Activated T-helper 2 cell treated with anti-CD3 and anti-CD28 coated beads, Interferon-gamma antibody, Interleukin-2, Interleukin-4, amounts not matched to agents 10 μg/mL and 5 μg/mL and 100 μg/mL, durations not matched to agents 14 hours and 24 hours and 36 hours (primary cell): ENCODE measurements at regions of chr6 and their contacts with region 1.

Region 1: DNA sequence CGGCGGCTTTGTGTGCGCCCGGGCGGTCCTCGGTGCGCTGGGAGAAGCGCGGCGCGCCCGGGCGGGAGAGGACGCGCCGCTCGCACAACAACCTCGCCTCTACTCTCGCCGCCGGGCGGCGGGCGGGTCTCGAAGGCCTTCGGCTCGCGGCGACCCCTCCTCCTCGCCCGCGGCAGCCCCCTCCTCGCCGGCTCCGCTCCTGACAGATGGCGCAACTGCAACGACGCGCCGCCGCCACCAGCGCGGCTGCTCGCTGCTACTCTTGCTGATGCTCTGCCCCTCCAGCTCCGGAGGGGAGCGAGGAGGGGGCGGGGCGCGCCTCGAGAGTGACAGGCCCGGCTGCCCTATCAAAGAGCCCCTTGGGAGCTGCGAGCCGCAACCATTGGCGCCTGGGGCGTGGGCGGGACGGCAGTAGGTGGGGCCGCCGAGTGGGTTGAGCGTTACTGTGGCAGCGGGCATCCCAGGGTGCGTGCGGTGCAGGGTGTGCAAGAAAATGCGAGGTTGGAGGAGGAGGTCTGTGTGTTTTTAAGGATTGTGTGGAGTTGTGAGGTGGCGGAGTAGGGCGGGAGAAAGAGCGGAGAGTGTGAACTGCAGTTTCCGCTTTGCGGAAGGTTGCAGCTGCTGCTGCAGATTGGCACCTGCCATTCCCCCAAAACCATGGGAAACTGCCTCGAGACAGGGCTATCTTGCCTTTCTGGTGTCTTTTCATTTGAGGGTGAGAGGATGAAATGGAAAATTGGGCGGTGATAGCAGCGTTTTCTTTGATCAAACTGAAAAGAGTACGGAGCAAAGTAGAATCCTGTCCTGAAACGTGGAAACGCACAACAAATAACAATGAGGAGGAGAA is at the start of gene FYN:
- DNase-seq: peak; percentile 98
- H3K4me3 Mint-ChIP-seq: peak within 1 kb of the TSS; percentile 97
- H3K27ac Mint-ChIP-seq: peak within 1 kb of the TSS; percentile 94
- H3K4me1 Mint-ChIP-seq: peaks cover 40% of the 10 kb centered on the region
- H3K27me3 Mint-ChIP-seq: peaks cover 2% of the 10 kb centered on the region
- total RNA-seq, gene FYN: 359 TPM in 2 replicates

Region 2: DNA sequence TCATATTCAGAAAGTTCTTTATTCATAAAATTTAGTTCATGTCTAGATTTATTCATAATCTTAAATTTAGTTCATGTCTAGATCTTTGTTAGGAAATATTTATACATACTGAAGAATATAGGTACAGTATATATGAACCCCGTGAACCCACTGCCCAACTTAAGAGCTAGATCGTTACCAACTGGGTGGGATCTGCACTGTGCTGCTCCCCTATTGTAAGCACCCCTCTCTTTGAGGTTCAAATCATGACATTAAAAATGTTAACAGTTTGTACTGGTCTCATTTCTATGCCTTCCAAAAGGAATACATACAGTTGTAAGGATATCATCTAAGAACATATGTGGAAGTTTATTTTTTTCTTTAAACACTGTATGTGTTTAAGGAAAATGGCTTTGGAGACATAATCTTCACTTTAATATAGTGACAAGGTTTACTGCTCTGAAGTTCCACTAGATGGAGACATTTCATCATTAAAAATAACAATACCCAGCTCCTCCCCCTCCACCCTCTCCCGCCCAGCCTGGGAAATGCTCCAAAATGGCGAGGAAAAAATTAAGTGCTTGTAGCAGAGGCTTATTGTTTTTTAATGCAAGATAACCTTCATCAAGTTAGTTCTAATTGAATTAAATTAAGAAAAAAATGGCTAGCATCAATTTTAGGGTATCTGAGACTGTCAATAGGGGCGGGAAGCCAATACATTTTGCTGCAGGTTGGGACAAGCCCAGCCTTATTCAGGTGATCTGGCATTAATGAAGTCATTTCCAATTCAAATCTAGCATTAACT is 163.6 kb before region 1 on chr6:
- intact Hi-C with region 1: loop called (anchors 1 kb)
- DNase-seq: peak; percentile 43
- H3K4me3 Mint-ChIP-seq: no peak overlapping the region
- H3K27ac Mint-ChIP-seq: peak overlapping the region; percentile 49
- H3K4me1 Mint-ChIP-seq: peaks cover 44% of the 10 kb centered on the region
- H3K27me3 Mint-ChIP-seq: no peaks in the 10 kb centered on the region

Region 3: GRCh38 chr6:111823831-111824607 is 49.4 kb before region 1 on chr6:
- intact Hi-C with region 1: loop called (anchors 1 kb)
- DNase-seq: no peak
- H3K4me3 Mint-ChIP-seq: peak overlapping the region; percentile 66
- H3K27ac Mint-ChIP-seq: peak overlapping the region; percentile 89
- H3K4me1 Mint-ChIP-seq: peaks cover 68% of the 10 kb centered on the region
- H3K27me3 Mint-ChIP-seq: no peaks in the 10 kb centered on the region

Region 4: DNA sequence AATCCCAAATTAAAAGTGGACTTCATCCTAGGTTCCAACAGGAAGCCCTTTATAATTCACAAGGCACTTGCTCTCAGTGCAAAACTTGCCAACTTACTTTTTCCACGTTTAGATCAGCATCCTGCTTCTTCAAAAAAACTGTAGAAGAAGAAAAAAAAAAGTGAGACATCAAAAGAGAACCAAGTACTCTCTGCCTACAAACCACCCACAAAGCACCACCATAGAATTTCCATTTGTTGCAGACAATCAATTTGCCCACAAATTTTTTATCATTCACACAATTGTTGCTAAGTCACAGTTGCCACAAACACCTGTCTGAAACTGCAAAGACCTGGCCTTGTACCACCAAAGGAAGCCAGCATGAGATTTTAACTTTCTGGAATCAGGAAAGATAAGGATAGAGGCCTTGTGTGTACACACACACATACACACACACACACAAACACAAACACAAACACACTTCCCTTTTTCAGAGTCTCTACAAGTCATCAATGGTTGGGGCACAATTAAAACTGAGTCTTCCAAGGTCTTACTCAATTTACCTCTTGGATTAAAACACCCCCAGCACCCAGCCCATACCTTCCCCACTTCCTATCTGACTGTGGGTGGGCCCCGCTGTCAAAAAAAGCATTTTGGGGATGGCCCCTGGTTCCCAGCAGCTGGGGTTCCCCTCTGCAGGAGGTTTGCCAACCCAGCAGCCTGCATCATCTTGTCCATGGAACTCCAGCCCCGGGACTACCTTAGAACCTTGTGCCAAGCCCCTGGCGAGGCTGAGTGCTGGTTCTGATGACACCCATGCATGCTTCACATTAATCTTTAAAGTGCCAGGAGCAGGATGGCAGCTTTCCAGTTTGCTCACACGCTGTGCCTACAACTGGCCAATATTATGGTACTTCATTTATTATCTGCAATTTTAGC is 26.6 kb before region 1 on chr6:
- intact Hi-C with region 1: loop called (anchors 1 kb)
- DNase-seq: no peak
- H3K4me3 Mint-ChIP-seq: peak overlapping the region; percentile 53
- H3K27ac Mint-ChIP-seq: peak overlapping the region; percentile 92
- H3K4me1 Mint-ChIP-seq: peaks cover 71% of the 10 kb centered on the region
- H3K27me3 Mint-ChIP-seq: no peaks in the 10 kb centered on the region

Region 5: DNA sequence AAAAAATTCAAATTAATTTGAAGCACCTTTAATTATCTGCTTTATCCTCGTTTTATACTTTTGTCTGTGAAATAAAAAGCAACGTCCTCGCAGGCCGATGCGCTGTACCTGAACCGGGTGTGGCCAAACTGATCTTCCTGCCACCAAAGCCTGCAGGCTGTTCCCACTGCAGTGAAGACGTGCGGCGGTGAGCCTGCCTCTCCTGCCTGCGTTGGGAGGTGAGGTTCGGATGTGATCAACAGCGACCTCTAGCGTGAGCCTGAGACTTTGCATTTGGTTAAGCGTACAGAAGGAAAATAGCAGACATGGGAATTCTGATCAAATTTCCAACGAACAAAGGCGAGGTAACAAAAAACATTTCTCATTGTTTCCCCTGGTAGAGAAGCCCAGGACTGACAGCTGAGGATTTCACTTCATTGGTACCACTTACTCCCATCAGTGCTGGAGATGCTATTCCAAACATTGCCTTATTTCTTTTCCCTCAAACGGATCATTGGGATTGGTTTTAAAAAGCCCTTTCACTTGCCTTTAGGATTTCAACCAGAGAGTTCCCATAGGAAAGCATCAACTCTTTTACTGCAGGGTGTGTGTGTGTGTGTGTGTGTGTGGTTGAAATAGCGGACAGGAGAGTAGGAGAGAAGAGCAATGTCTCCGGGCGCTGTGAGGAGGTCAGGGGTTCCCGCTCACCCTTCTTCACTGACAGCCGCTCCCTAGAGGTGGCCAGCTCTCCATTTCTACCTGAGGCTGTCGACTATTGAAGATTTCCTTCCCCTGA is 123.9 kb after region 1 on chr6:
- intact Hi-C with region 1: loop called (anchors 1 kb)
- DNase-seq: peak; percentile 69
- H3K4me3 Mint-ChIP-seq: no peak overlapping the region
- H3K27ac Mint-ChIP-seq: no peak overlapping the region
- H3K4me1 Mint-ChIP-seq: peaks cover 37% of the 10 kb centered on the region
- H3K27me3 Mint-ChIP-seq: no peaks in the 10 kb centered on the region

Region 6: DNA sequence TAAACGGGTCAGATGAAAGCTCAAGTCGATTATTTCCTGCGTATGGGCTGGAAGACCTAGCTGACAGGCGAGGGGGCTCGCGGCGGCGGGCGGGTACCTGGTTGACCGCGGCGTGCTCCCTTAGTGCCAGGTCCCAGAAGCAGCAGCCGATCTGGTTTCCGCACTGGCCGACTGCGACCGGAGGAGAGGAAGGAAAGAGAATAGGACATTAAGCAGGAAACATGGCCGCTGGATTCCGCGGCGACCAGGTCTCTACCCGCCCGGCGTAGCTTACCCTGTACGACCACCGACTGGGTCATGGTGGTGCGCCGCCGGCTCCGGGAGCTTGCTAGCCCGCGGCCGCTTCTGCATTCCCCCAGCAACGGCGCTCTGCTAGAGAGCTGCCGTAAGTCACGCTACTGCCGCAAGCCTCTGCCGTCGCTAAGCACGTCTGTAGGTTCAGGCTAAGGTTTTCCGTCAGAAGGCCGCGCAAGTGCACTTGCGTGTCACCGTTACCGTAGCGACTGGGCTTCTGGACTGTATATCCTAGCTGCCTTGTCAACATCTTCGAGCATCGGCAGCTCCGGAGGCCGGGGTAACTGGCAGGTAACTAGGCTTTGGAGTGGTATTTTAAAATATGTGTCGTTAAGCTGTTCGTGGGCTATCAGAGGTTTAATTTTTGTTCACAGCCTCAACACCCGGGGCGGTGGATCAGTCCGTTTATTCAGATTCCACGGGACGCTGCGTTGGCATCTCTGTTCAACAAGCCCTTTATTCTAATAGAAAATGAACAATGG is 213.9 kb after region 1 on chr6 and contains the starts of genes FAM229B and TUBE1:
- intact Hi-C with region 1: loop called (anchors 2 kb)
- DNase-seq: peak; percentile 87
- H3K4me3 Mint-ChIP-seq: no peak within 1 kb of the TSS
- H3K27ac Mint-ChIP-seq: no peak within 1 kb of the TSS
- H3K4me1 Mint-ChIP-seq: peaks cover 8% of the 10 kb centered on the region
- H3K27me3 Mint-ChIP-seq: peaks cover 24% of the 10 kb centered on the region
- total RNA-seq, gene FAM229B: 1.1 and 3.1 TPM in 2 replicates
- total RNA-seq, gene TUBE1: 21.0 and 24.3 TPM in 2 replicates

Region 7: DNA sequence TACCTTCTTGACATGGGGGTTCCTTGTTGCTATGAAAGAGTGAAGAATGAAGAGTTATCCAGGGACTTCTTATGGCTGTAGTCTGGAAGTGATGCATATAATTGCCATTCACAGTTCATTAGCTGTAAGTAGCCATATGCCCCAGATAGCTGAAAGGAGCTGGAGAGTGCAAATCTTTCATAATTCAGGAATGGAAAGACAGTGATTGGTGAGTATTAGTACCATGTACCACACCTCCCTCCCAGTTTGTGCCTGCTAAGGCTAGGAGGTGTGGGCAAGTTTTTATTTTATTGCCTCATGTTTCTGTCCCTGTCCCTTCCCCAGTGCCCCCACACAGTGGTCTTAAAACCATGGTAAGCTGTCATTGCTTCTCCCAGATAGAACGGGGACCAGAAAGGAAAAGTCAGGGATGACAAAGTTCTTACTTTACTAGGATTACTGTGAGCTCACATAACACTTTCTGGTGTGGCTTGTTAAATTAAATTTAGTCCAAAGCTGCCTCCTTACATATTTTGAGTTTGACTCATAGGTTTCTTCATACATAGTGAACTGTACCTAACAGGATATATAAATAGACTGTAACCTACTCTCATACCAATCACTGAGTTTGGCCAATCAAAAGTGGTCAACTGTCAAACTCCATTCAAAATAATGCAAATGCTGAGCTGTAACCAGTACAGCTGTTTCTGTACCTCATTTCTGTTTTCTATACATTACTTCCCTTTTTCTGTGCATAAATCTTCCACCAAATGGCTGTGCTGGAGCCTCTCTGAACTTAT is 593.2 kb after region 1 on chr6:
- intact Hi-C with region 1: no loop called
- DNase-seq: no peak
- H3K4me3 Mint-ChIP-seq: no peak overlapping the region
- H3K27ac Mint-ChIP-seq: no peak overlapping the region
- H3K4me1 Mint-ChIP-seq: no peaks in the 10 kb centered on the region
- H3K27me3 Mint-ChIP-seq: no peaks in the 10 kb centered on the region